ENCODE measurements at regions of chr10 and their contacts with region 1.

Region 1: GRCh38 chr10:77004917-77005564 is 632.6 kb downstream of the KCNMA1 start:
- DNase-seq: peak; percentile 99
- ATAC-seq: peak; percentile 89
- H3K4me3 ChIP-seq: no peak overlapping the region
- H3K27ac ChIP-seq: no peak overlapping the region
- H3K4me1 ChIP-seq: peaks cover 4% of the 10 kb centered on the region; the same call in 1 of the 2 replicates
- H3K27me3 ChIP-seq: no peaks in the 10 kb centered on the region
- CTCF ChIP-seq: peak; percentile 100

Region 2: GRCh38 chr10:76113959-76114358 is 891.1 kb before region 1 on chr10:
- CTCF ChIA-PET with region 1: no interaction called
- POLR2A ChIA-PET with region 1: no interaction called
- intact Hi-C with region 1: loop called (anchors 10 kb)
- DNase-seq: peak; percentile 98
- ATAC-seq: peak; percentile 76
- H3K4me3 ChIP-seq: peak overlapping the region; percentile 0; the same call in 1 of the 2 replicates
- H3K27ac ChIP-seq: peak overlapping the region; percentile 23
- H3K4me1 ChIP-seq: peaks cover 41% of the 10 kb centered on the region
- H3K27me3 ChIP-seq: peaks cover 51% of the 10 kb centered on the region
- CTCF ChIP-seq: no peak

Region 3: DNA sequence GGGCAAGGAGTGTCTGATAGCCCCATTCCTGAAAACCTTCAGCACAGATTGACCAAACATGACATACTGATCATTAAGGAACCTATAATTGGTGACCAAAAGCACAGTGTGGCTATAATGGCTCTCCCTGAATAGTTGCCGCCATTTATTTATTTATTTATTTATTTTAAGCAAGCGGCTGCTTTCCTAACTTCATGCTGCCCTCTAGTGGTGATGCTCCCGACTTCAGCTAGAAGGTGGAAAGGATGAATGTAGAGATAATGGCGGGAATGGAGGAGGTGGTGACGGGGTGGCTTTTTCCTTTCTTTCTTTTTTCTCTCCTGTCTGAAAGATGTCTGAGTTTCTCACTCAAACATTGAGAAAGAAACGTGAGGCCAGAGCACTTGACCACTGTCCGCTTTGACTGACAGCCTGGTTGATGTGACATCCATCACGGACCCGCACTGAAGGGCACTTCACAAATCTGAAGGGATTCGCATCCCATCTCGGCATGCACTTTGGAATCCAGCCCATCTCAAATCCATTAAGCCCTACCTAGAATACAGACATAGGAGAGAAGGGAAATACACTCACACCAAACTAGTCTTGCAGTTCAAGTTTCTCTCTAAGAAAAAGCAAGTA is 457.6 kb before region 1 on chr10:
- CTCF ChIA-PET with region 1: no interaction called
- POLR2A ChIA-PET with region 1: no interaction called
- intact Hi-C with region 1: loop called (anchors 1 kb)
- DNase-seq: peak; percentile 100
- ATAC-seq: peak; percentile 85
- H3K4me3 ChIP-seq: peak overlapping the region; percentile 44
- H3K27ac ChIP-seq: no peak overlapping the region
- H3K4me1 ChIP-seq: peaks cover 5% of the 10 kb centered on the region
- H3K27me3 ChIP-seq: peaks cover 26% of the 10 kb centered on the region
- CTCF ChIP-seq: peak; percentile 100

Region 4: GRCh38 chr10:76723844-76724243 is 281.2 kb before region 1 on chr10:
- CTCF ChIA-PET with region 1: no interaction called
- POLR2A ChIA-PET with region 1: no interaction called
- intact Hi-C with region 1: loop called (anchors 10 kb)
- DNase-seq: no peak
- ATAC-seq: no peak
- H3K4me3 ChIP-seq: no peak overlapping the region
- H3K27ac ChIP-seq: no peak overlapping the region
- H3K4me1 ChIP-seq: peaks cover 30% of the 10 kb centered on the region
- H3K27me3 ChIP-seq: peaks cover 20% of the 10 kb centered on the region
- CTCF ChIP-seq: no peak

Region 5: DNA sequence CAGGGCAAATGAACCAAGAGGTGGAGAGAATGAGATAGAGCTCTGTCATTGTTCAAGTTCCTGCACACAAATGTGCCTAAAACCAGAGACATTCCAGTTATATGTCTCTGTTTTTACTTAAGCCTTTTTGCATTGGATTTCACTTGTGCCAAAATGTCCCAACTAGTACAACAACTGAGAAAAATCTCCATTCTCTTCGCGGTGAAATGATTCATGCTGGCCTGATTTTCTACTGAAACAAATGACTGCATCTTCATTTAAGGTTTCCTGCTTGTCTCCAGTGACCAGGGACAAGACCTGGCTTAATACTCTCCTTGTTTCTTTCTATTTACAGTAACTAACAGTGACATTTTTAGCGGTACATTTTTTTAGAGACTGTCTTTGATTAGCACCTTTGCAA is 82.4 kb before region 1 on chr10:
- CTCF ChIA-PET with region 1: no interaction called
- POLR2A ChIA-PET with region 1: no interaction called
- intact Hi-C with region 1: loop called (anchors 10 kb)
- DNase-seq: no peak
- ATAC-seq: peak; percentile 50
- H3K4me3 ChIP-seq: no peak overlapping the region
- H3K27ac ChIP-seq: no peak overlapping the region
- H3K4me1 ChIP-seq: no peaks in the 10 kb centered on the region
- H3K27me3 ChIP-seq: no peaks in the 10 kb centered on the region
- CTCF ChIP-seq: no peak

Region 6: GRCh38 chr10:76946270-76946669 is 58.8 kb before region 1 on chr10:
- CTCF ChIA-PET with region 1: no interaction called
- POLR2A ChIA-PET with region 1: interaction called, 3 read pairs
- intact Hi-C with region 1: loop called (anchors 5 kb)
- DNase-seq: peak; percentile 60
- ATAC-seq: 0 out of 2 replicates have a peak, but pooled peaks have one; percentile 9
- H3K4me3 ChIP-seq: no peak overlapping the region
- H3K27ac ChIP-seq: no peak overlapping the region
- H3K4me1 ChIP-seq: no peaks in the 10 kb centered on the region
- H3K27me3 ChIP-seq: 0 out of 2 replicates have a peak, but pooled peaks cover 2% of the 10 kb centered on the region
- CTCF ChIP-seq: no peak

Region 7: GRCh38 chr10:77185696-77186095 is 180.7 kb after region 1 on chr10:
- CTCF ChIA-PET with region 1: no interaction called
- POLR2A ChIA-PET with region 1: no interaction called
- intact Hi-C with region 1: no loop called
- DNase-seq: no peak
- ATAC-seq: peak; percentile 33
- H3K4me3 ChIP-seq: no peak overlapping the region
- H3K27ac ChIP-seq: no peak overlapping the region
- H3K4me1 ChIP-seq: peaks cover 10% of the 10 kb centered on the region
- H3K27me3 ChIP-seq: no peaks in the 10 kb centered on the region
- CTCF ChIP-seq: 0 out of 2 replicates have a peak, but pooled peaks have one; percentile 31

Measured in PC-3 (cell line).